ENCODE measurements at regions of chr17 and their contacts with region 1.

Region 1: GRCh38 chr17:43360739-43361505 is 37.9 kb upstream of the ARL4D start:
- DNase-seq: peak; percentile 91
- H3K4me3 Mint-ChIP-seq: peak overlapping the region; percentile 85
- H3K27ac Mint-ChIP-seq: peak overlapping the region; percentile 100
- H3K4me1 Mint-ChIP-seq: peaks cover 33% of the 10 kb centered on the region
- H3K27me3 Mint-ChIP-seq: peaks cover 8% of the 10 kb centered on the region

Region 2: GRCh38 chr17:43338886-43339516 is 21.9 kb before region 1 on chr17:
- CTCF ChIA-PET with region 1: interaction called, 10 read pairs
- intact Hi-C with region 1: loop called (anchors 1 kb)
- DNase-seq: peak; percentile 82
- H3K4me3 Mint-ChIP-seq: no peak overlapping the region
- H3K27ac Mint-ChIP-seq: no peak overlapping the region
- H3K4me1 Mint-ChIP-seq: peaks cover 31% of the 10 kb centered on the region
- H3K27me3 Mint-ChIP-seq: no peaks in the 10 kb centered on the region